ENCODE measurements at regions of chr6 and their contacts with region 1.

Region 1: GRCh38 chr6:24991810-24992467 is 56.2 kb upstream of the RIPOR2 start:
- DNase-seq: peak; percentile 28
- H3K4me3 ChIP-seq: no peak overlapping the region
- H3K27ac ChIP-seq: no peak overlapping the region
- H3K4me1 ChIP-seq: no peaks in the 10 kb centered on the region
- H3K27me3 ChIP-seq: no peaks in the 10 kb centered on the region
- CTCF ChIP-seq: peak; percentile 55 to 66
- POLR2A ChIP-seq: no peak

Region 2: DNA sequence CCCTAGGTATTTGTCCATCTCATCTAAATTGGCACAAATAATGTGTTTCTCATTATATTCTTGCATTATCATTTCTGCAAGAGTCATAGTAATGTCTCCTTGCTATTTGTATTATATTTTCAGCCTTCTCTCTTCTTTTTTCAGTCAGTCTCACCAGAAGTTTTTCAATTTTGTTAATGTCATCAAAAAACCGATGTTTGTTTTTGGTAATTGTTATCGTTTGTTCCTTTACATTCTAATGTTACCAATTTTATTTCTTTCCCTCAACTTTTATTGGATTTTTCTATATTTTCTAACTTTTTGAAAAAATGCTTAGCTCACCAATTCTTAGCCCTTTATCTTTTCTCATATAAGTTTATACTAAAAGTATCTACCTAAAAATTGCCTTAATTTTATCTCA is 948.1 kb before region 1 on chr6:
- CTCF ChIA-PET with region 1: no interaction called
- POLR2A ChIA-PET with region 1: no interaction called
- dilution Hi-C with region 1: no loop called
- intact Hi-C with region 1: no loop called
- DNase-seq: no peak
- H3K4me3 ChIP-seq: no peak overlapping the region
- H3K27ac ChIP-seq: no peak overlapping the region
- H3K4me1 ChIP-seq: no peaks in the 10 kb centered on the region
- H3K27me3 ChIP-seq: no peaks in the 10 kb centered on the region
- CTCF ChIP-seq: no peak
- POLR2A ChIP-seq: no peak

Region 3: GRCh38 chr6:24855395-24856245 is 136.3 kb before region 1 on chr6:
- CTCF ChIA-PET with region 1: interaction called, 34 read pairs
- POLR2A ChIA-PET with region 1: no interaction called
- dilution Hi-C with region 1: no loop called
- intact Hi-C with region 1: loop called (anchors 1 kb)
- DNase-seq: peak; percentile 70
- H3K4me3 ChIP-seq: no peak overlapping the region
- H3K27ac ChIP-seq: no peak overlapping the region
- H3K4me1 ChIP-seq: no peaks in the 10 kb centered on the region
- H3K27me3 ChIP-seq: no peaks in the 10 kb centered on the region
- CTCF ChIP-seq: peak; percentile 74 to 76
- POLR2A ChIP-seq: no peak

Region 4: DNA sequence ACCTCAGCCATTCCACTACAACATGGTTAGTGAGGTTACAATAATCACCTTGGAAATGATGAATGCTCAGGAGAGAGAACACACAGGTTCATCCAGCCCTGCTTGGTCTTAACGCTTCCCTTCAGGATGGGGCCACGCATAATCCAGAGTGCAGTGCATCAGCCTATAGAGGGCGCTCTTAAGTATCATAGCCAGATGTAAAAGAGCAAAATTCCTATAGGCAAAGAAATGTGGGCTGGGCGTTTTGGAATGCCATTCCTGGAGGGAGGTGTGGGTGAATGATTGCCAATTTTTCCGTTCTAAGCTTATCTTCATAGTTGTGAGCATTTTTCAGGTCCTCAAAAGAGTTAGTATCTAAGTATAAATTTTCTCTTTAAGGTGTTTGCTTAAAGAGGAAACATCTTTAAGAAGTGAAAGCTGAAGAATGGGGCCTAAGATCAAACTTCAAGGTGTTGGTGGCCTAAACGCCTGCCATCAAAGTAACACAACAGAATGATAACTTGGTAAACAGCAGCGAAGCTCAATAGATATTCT is 58.0 kb before region 1 on chr6:
- CTCF ChIA-PET with region 1: interaction called, 19 read pairs
- POLR2A ChIA-PET with region 1: no interaction called
- dilution Hi-C with region 1: no loop called
- intact Hi-C with region 1: no loop called
- DNase-seq: peak; percentile 22
- H3K4me3 ChIP-seq: no peak overlapping the region
- H3K27ac ChIP-seq: no peak overlapping the region
- H3K4me1 ChIP-seq: no peaks in the 10 kb centered on the region
- H3K27me3 ChIP-seq: peaks cover 0 to 3% of the 10 kb centered on the region in 2 experiments
- CTCF ChIP-seq: peak; percentile 40 to 57
- POLR2A ChIP-seq: no peak

Region 5: DNA sequence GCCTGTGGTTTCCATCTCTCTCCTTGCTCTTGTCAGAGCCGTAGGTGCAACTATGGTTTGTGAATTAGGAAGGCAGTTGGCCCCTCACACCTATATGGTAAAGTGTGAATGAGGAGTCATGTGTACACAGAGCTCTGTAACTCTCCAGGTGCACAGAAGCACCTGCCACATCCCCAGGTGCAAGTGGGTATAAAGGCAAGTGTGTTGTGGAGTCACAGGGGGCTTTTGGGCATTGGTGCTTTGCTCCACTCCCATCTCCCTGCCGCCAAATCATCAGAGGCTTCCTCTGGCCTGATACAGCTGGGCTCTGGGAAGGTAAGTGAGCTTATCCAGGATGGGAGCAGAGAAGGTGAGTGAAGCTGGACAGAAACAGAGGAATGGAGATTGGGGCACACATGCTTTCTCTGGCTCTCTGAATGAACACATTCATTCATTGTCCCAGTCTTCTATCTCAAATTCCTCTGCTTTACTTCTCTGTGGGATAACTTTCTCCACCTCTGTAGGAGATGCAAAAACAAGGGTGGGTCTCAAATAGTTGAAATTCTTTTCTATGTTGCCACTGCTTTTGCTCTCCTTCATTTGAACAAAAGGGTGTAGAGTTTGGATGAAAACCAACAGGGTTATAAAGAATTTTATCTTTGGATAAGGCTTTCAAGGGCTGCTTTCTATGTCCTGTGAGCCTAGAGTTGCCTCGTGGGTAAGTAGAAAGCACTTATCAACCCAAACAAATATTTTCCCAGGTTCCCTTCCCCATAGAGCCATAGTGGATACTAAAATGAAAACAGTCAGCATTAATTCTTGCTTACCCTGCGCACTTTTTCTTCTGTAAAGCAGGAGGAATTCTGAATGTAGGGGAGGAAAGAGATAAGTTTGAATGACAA is 11.2 kb before region 1 on chr6:
- CTCF ChIA-PET with region 1: interaction called, 51 read pairs
- POLR2A ChIA-PET with region 1: no interaction called
- dilution Hi-C with region 1: no loop called
- intact Hi-C with region 1: no loop called
- DNase-seq: no peak
- H3K4me3 ChIP-seq: no peak overlapping the region
- H3K27ac ChIP-seq: no peak overlapping the region
- H3K4me1 ChIP-seq: no peaks in the 10 kb centered on the region
- H3K27me3 ChIP-seq: no peaks in the 10 kb centered on the region
- CTCF ChIP-seq: no peak
- POLR2A ChIP-seq: no peak

Region 6: DNA sequence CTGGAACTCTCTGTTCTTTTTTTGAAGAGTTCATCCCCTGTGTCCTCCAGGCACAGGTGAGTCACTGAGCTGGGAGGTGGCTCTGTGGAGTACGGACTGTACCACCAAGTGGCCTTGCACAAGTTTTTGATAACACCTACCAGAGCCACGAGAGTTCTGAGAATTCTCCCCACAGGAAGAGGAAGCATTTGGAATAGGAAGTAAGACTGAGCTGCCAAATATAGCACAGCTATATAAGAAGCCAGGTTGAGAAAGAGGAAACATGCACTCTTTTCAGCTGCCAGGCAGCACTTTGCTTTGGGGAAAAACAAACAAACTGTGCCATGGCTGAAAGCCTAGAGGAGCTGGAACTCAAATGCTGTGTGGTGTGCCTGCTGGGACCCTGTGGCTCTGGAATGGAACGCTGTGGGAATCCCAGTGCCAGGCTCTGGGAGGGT is 14.6 kb after region 1 on chr6:
- CTCF ChIA-PET with region 1: interaction called, 45 read pairs
- POLR2A ChIA-PET with region 1: no interaction called
- dilution Hi-C with region 1: no loop called
- intact Hi-C with region 1: no loop called
- DNase-seq: peak; percentile 68
- H3K4me3 ChIP-seq: no peak overlapping the region
- H3K27ac ChIP-seq: peak overlapping the region; percentile 19
- H3K4me1 ChIP-seq: peaks cover 33% of the 10 kb centered on the region
- H3K27me3 ChIP-seq: no peaks in the 10 kb centered on the region
- CTCF ChIP-seq: no peak
- POLR2A ChIP-seq: no peak

Region 7: DNA sequence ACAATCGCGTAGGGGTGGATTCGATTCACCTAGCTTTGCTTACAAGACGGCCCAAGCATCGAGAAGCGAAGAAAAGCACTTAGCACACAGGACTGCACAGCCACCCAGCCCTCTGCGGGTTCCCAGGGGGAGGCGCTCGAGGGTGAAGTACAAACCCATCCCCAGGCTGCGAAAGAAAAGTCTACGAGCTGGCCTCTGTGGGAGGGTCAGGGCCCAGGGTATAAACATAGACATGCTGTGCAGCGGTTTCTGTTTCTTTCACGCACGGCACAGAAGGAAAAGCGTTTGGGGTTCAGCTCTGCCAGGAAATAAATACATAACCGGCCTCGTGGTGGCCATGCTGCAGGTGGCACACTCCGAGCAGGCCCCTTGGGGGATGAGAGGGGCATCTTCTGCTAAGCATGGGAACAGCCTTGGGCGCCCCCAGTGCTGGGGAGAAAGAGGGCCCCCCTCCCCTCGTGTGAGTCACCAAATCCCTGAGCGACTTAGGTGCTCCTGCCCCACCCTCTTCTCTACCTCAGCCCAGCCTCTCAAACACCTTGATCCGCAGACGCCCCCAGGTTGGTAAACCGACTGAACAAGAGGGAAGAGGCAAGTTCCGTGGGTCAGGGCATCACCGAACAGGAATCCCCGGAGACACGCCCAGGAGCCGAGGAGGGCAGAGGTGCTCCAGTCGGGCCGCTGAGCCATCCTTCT is 35.4 kb after region 1 on chr6:
- CTCF ChIA-PET with region 1: interaction called, 12 read pairs
- POLR2A ChIA-PET with region 1: no interaction called
- dilution Hi-C with region 1: no loop called
- intact Hi-C with region 1: no loop called
- DNase-seq: no peak
- H3K4me3 ChIP-seq: no peak overlapping the region
- H3K27ac ChIP-seq: no peak overlapping the region
- H3K4me1 ChIP-seq: no peaks in the 10 kb centered on the region
- H3K27me3 ChIP-seq: no peaks in the 10 kb centered on the region
- CTCF ChIP-seq: no peak
- POLR2A ChIP-seq: no peak

Region 8: DNA sequence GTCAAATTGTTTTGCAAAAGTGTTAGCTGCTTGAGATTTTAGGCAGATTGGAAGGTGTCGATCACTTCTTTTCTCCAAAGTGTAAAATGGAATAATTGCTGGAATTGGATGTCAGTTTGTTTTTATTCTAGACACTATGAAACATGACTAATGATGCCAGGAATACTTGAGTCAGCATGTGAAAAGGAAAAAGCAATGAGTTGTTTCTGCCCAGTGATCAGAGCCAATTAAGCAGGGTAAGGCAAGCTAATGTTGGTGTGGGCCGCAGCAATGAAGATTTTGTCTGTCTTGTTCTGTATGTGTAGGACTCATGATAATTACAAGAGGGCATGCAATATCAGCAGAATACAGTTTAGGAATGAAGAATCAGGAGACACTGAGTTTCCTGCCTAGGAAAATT is 397.5 kb after region 1 on chr6:
- CTCF ChIA-PET with region 1: no interaction called
- POLR2A ChIA-PET with region 1: no interaction called
- dilution Hi-C with region 1: no loop called
- intact Hi-C with region 1: no loop called
- DNase-seq: peak; percentile 91
- H3K4me3 ChIP-seq: no peak overlapping the region
- H3K27ac ChIP-seq: no peak overlapping the region
- H3K4me1 ChIP-seq: peaks cover 5% of the 10 kb centered on the region
- H3K27me3 ChIP-seq: no peaks in the 10 kb centered on the region
- CTCF ChIP-seq: no peak
- POLR2A ChIP-seq: no peak